Right ventricle myocardium inferior (tissue), 1 donor: ENCODE measurements at regions of chr11 and their contacts with region 1.

Region 1: GRCh38 chr11:85682330-85683305 is 3.4 kb downstream of the CCDC89 start:
- DNase-seq: peak; percentile 83
- ATAC-seq: peak; percentile 64

Region 2: DNA sequence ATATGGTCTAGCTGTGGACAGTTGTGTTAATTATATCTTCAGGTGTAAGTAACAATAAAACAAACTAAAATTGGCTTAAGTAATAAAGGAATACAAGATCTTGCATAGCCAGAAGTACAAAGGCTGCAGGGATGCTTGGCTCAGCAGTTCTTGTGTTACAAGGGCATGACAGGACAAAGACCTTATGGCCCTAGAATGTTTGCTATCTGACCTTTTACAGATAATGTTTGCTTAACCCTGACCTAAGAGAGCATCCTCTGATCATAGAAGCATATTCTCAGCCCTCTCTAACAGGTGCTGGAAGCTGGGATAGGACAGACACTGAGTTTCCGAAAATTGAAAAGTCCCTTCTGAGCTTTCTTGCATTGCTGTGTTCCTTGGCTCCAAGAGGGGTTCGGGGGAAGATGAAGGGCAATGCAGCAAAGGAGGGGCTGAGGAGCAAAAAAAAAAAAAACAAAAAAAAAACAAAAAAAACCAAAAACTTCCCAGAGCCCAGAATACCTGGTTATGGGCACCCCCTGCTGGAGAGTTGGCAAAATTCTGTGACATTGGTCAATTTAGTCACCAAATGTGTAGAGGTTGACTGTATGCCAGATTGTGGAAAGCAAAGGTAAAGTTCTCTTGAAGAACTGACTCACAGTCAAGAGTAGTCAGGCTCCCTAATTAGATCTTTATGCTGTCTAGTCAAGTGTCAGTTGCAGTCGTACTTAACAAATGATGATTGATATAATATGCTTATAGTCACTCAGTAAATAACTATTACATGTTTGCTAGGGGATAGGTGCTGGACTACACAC is 609.0 kb after region 1 on chr11:
- intact Hi-C with region 1: loop called (anchors 10 kb)
- DNase-seq: no peak
- ATAC-seq: no peak